GM12878 (cell line): ENCODE measurements at regions of chr2 and their contacts with region 1.

Region 1: GRCh38 chr2:198296665-198297308 is 492.4 kb downstream of the PLCL1 start:
- DNase-seq: no peak
- ATAC-seq: peak; percentile 96
- H3K4me3 ChIP-seq: no peak overlapping the region
- H3K27ac ChIP-seq: no peak overlapping the region
- H3K4me1 ChIP-seq: no peaks in the 10 kb centered on the region
- H3K27me3 ChIP-seq: peaks cover 0 to 2% of the 10 kb centered on the region in 2 experiments; a peak in 3 of 4 replicates
- CTCF ChIP-seq: peak; percentile 58 to 77 (median 65)
- EP300 ChIP-seq: no peak
- POLR2A ChIP-seq: no peak
- RAD21 ChIP-seq: peak; percentile 84

Region 2: GRCh38 chr2:197710424-197711042 is 586.3 kb before region 1 on chr2:
- CTCF ChIA-PET with region 1: interaction called, 13 read pairs
- POLR2A ChIA-PET with region 1: no interaction called
- RAD21 ChIA-PET with region 1: no interaction called
- SMC1A ChIA-PET with region 1: interaction called, 5 read pairs
- in situ Hi-C with region 1: no loop called
- intact Hi-C with region 1: loop called (anchors 10 kb)
- DNase-seq: peak; percentile 62
- ATAC-seq: peak; percentile 81
- H3K4me3 ChIP-seq: no peak overlapping the region
- H3K27ac ChIP-seq: no peak overlapping the region
- H3K4me1 ChIP-seq: peaks cover 19% of the 10 kb centered on the region
- H3K27me3 ChIP-seq: no peaks in the 10 kb centered on the region
- CTCF ChIP-seq: no peak
- EP300 ChIP-seq: peak in 1 of 2 experiments; percentile 87; a peak in 2 of 4 replicates
- POLR2A ChIP-seq: no peak
- RAD21 ChIP-seq: no peak

Region 3: GRCh38 chr2:197793456-197793855 is 503.3 kb before region 1 on chr2:
- CTCF ChIA-PET with region 1: interaction called, 35 read pairs
- POLR2A ChIA-PET with region 1: no interaction called
- RAD21 ChIA-PET with region 1: interaction called, 4 read pairs
- SMC1A ChIA-PET with region 1: interaction called, 37 read pairs
- in situ Hi-C with region 1: no loop called
- intact Hi-C with region 1: no loop called
- DNase-seq: no peak
- ATAC-seq: no peak
- H3K4me3 ChIP-seq: no peak overlapping the region
- H3K27ac ChIP-seq: no peak overlapping the region
- H3K4me1 ChIP-seq: no peaks in the 10 kb centered on the region
- H3K27me3 ChIP-seq: peaks cover 0 to 2% of the 10 kb centered on the region in 2 experiments; a peak in 2 of 4 replicates
- CTCF ChIP-seq: no peak
- EP300 ChIP-seq: no peak
- POLR2A ChIP-seq: no peak
- RAD21 ChIP-seq: no peak

Region 4: DNA sequence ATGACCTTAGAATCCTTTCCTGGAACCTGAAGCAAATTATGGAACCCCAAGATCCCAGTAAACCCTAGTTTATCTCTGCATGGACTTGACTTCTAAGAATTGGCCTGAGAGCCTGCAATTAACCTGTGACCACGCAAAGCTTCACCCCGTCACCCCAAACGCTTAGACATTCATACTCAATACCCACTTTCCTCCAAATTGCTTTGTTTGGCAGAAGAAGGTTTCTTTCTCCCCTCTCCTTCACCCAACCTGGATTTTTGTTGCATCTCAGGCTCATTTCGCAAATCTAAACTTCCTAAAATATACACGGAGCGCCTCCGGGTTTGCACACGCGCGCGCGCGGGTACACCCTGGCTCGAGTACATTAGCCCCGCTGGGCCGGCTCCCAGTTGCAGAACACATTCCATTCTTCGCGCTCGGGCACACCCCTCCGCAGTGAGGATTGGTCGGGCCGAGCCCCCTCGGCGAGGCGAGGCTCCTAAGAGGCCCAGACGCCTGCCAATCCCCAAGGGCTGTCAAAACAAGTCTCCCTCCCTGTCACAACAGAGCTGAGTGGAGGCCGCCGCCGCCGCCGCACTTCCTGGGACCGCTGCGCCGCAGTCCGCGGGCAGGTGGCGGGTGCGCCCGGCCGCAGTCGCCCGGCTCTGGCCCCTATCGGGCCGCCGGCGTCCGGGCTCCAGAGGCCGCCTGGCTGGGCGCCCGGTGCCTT is 492.6 kb before region 1 on chr2 and contains the start of gene PLCL1:
- CTCF ChIA-PET with region 1: interaction called, 35 read pairs
- POLR2A ChIA-PET with region 1: no interaction called
- RAD21 ChIA-PET with region 1: interaction called, 14 read pairs
- SMC1A ChIA-PET with region 1: interaction called, 37 read pairs
- in situ Hi-C with region 1: loop called (anchors 5 kb)
- intact Hi-C with region 1: loop called (anchors 1 kb)
- DNase-seq: peak; percentile 40
- ATAC-seq: peak; percentile 99
- H3K4me3 ChIP-seq: peak within 1 kb of the TSS; percentile 62
- H3K27ac ChIP-seq: no peak within 1 kb of the TSS
- H3K4me1 ChIP-seq: no peaks in the 10 kb centered on the region
- H3K27me3 ChIP-seq: peaks cover 4 to 19% of the 10 kb centered on the region in 2 experiments
- CTCF ChIP-seq: 0 out of 6 replicates have a peak, but pooled peaks of 1 of the 3 experiments have one; percentile 2
- EP300 ChIP-seq: no peak
- POLR2A ChIP-seq: no peak
- RAD21 ChIP-seq: no peak
- polyA plus RNA-seq, gene PLCL1: 0.03 to 0.05 TPM

Region 5: DNA sequence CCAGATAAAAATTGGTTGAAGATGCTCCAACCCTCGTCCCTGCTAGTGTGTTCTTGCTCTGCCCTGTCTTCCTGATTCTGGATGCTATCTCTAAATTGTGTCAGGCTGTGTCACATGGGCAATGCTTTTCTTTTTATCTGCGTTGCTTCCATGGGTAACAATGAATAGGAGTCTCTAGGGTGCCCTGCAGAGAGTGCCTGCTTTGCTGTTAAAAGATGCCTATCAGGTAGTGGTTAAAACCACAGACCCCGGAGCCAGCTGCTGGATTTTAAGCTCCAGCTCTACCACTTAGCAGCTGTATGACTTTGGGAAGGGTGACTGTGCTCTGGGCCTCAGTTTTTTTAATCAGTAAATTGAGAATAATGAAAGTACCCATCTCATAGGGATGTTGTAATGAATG is 152.1 kb before region 1 on chr2:
- CTCF ChIA-PET with region 1: interaction called, 4 read pairs
- POLR2A ChIA-PET with region 1: no interaction called
- RAD21 ChIA-PET with region 1: no interaction called
- SMC1A ChIA-PET with region 1: interaction called, 3 read pairs
- in situ Hi-C with region 1: no loop called
- intact Hi-C with region 1: loop called (anchors 5 kb)
- DNase-seq: no peak
- ATAC-seq: no peak
- H3K4me3 ChIP-seq: no peak overlapping the region
- H3K27ac ChIP-seq: no peak overlapping the region
- H3K4me1 ChIP-seq: no peaks in the 10 kb centered on the region
- H3K27me3 ChIP-seq: no peaks in the 10 kb centered on the region; a peak in 1 of 4 replicates
- CTCF ChIP-seq: no peak
- EP300 ChIP-seq: no peak
- POLR2A ChIP-seq: no peak
- RAD21 ChIP-seq: no peak

Region 6: GRCh38 chr2:198309673-198310280 is 13.0 kb after region 1 on chr2:
- CTCF ChIA-PET with region 1: interaction called, 14 read pairs
- POLR2A ChIA-PET with region 1: no interaction called
- RAD21 ChIA-PET with region 1: interaction called, 3 read pairs
- SMC1A ChIA-PET with region 1: interaction called, 13 read pairs
- in situ Hi-C with region 1: no loop called
- intact Hi-C with region 1: no loop called
- DNase-seq: no peak
- ATAC-seq: peak; percentile 67
- H3K4me3 ChIP-seq: no peak overlapping the region
- H3K27ac ChIP-seq: no peak overlapping the region
- H3K4me1 ChIP-seq: no peaks in the 10 kb centered on the region
- H3K27me3 ChIP-seq: peaks cover 1 to 2% of the 10 kb centered on the region in 2 experiments; a peak in 1 of 4 replicates
- CTCF ChIP-seq: peak; percentile 69 to 83 (median 81)
- EP300 ChIP-seq: no peak
- POLR2A ChIP-seq: no peak
- RAD21 ChIP-seq: peak; percentile 79